ENCODE measurements at regions of chr19 and their contacts with region 1.

Region 1: DNA sequence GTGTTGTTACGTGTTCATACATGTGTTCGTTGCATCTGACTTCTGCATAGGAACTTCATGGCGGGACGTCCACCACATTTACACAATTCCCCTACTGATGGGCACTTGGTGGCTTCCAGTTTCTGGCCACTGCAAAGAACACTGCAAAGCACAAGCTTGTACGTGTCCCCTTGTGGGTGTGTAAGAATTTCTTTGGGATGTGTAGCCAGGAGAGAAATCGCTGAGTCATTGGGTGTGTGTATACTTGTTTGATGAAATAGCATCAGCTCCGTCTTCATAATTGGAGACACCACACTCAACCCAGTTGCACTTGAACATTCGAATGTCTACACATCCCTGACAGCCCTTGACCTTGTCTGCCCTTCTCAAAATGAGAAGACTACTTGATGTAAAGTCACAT is 19.2 kb downstream of the KLK5 start:
- DNase-seq: no peak
- ATAC-seq: no peak
- H3K4me3 ChIP-seq: no peak overlapping the region
- H3K4me3 Mint-ChIP-seq: no peak overlapping the region
- H3K27ac ChIP-seq: no peak overlapping the region
- H3K27ac Mint-ChIP-seq: no peak overlapping the region
- H3K4me1 ChIP-seq: no peaks in the 10 kb centered on the region
- H3K4me1 Mint-ChIP-seq: peaks cover 5% of the 10 kb centered on the region
- H3K27me3 ChIP-seq: peaks cover 15 to 20% of the 10 kb centered on the region in 2 experiments
- H3K27me3 Mint-ChIP-seq: peaks cover 51% of the 10 kb centered on the region
- CTCF ChIP-seq: no peak

Region 2: DNA sequence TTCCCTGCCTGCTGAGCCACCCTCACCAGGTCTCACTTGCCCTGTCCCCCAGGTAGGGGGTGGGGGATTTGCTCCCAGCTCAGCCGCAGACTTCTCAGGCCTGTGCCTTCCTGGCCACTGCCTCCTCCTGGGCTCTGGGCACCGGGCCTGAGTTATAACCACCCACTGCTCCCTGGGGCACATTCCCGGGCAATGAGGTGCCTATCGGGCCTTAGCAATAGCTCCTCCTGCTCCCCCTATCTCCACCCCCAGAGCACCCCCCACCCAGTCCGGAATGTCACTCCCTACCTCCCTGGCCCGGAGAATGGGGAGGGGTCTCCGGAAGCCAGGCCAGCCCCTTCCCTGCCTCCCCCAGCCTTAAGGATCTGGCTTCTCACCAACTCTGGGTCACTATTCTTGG is 19.3 kb after region 1 on chr19 and contains the start of gene KLK5:
- CTCF ChIA-PET with region 1: no interaction called
- POLR2A ChIA-PET with region 1: no interaction called
- intact Hi-C with region 1: no loop called
- DNase-seq: no peak
- ATAC-seq: no peak
- H3K4me3 ChIP-seq: no peak within 1 kb of the TSS
- H3K4me3 Mint-ChIP-seq: no peak within 1 kb of the TSS
- H3K27ac ChIP-seq: no peak within 1 kb of the TSS
- H3K27ac Mint-ChIP-seq: no peak within 1 kb of the TSS
- H3K4me1 ChIP-seq: no peaks in the 10 kb centered on the region
- H3K4me1 Mint-ChIP-seq: no peaks in the 10 kb centered on the region
- H3K27me3 ChIP-seq: peaks cover 9 to 11% of the 10 kb centered on the region in 2 experiments
- H3K27me3 Mint-ChIP-seq: peaks cover 42% of the 10 kb centered on the region
- CTCF ChIP-seq: no peak
- total RNA-seq, gene KLK5: not detected

Region 3: DNA sequence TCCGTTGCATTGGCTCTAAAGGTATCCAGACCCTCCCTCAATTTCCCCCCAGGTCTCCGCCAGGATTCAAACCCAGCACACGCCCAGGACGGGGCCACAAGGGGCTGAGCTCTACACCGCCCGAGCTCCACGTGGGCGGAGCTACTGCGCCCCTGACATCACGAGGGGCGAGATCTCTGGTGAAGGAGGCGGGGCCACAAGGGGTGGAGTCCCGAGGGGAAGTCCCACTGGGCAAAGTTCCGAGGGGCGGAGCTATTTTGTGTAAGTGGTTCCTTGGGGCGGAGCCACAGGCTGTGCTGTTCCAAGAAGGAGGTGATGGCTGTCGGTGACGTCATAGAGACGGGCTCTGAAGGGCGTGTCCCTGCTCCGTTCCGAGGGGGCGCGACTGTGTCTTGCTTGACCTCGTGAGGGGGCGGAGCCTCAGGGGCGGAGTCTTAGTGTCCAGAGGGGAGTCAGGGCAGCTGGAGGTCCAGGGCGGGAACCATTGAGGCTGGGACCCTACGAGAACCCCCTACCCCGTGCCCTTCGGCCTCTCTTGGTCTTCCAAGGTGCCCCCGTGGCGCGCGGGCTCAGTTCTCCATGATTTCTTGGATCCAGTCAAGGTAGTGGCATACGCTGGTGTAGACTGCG is 69.0 kb after region 1 on chr19:
- CTCF ChIA-PET with region 1: no interaction called
- POLR2A ChIA-PET with region 1: no interaction called
- intact Hi-C with region 1: no loop called
- DNase-seq: peak in 1 of 14 experiments; percentile 38
- ATAC-seq: no peak
- H3K4me3 ChIP-seq: no peak overlapping the region
- H3K4me3 Mint-ChIP-seq: no peak overlapping the region
- H3K27ac ChIP-seq: no peak overlapping the region
- H3K27ac Mint-ChIP-seq: no peak overlapping the region
- H3K4me1 ChIP-seq: no peaks in the 10 kb centered on the region
- H3K4me1 Mint-ChIP-seq: no peaks in the 10 kb centered on the region
- H3K27me3 ChIP-seq: peaks cover 27 to 30% of the 10 kb centered on the region in 2 experiments
- H3K27me3 Mint-ChIP-seq: peaks cover 77% of the 10 kb centered on the region
- CTCF ChIP-seq: no peak

Region 4: DNA sequence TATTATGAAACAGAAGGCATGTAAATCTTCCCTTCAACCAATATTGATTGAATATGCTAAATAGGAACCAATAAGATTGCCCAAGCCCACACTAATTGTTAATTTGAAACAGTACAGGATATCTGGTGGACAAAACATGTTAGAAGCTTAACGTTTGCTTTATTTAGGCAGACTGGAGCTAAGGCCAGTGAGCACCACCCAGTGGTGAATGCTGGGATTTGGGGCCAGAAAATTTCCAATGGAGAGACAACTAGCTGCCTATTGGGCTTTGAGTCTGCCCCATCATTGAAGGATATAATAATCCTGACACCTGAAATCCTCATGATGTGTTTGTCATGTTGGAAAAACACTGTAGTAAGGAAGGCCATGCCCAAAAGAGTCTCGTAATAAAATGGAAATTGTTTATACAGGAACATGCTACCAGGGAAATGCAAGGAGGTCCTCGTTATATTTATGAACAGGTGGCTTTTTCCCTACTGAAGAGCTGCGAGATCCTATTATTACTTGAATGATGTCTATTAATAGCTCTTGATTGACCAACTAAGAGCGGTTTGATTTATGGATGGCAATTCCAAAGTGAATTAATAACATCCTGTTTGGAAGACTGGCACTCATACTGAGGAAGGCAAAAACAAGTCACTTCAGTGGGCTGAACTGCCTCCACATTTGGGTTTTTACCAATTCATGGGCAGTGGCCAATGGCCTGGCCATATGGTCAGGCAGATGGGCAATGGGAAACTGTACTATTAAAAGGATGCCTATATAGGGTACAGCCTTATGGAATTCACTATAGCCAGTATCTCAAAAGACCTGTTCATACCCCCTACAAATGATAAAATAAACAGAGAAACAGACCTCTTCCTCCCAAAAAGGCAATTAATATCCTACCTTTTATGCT is 326.0 kb after region 1 on chr19:
- CTCF ChIA-PET with region 1: no interaction called
- POLR2A ChIA-PET with region 1: no interaction called
- intact Hi-C with region 1: loop called in 1 of 2 experiments (anchors 10 kb)
- DNase-seq: peak in 8 of 14 experiments; percentile 4 to 45 (median 34)
- ATAC-seq: peak; percentile 32
- H3K4me3 ChIP-seq: no peak overlapping the region
- H3K4me3 Mint-ChIP-seq: no peak overlapping the region
- H3K27ac ChIP-seq: no peak overlapping the region
- H3K27ac Mint-ChIP-seq: no peak overlapping the region
- H3K4me1 ChIP-seq: peaks cover 3% of the 10 kb centered on the region
- H3K4me1 Mint-ChIP-seq: no peaks in the 10 kb centered on the region
- H3K27me3 ChIP-seq: peaks cover 4 to 6% of the 10 kb centered on the region in 2 experiments
- H3K27me3 Mint-ChIP-seq: peaks cover 30% of the 10 kb centered on the region
- CTCF ChIP-seq: peak; percentile 63